ENCODE measurements at regions of chr4 and their contacts with region 1.

Region 1: DNA sequence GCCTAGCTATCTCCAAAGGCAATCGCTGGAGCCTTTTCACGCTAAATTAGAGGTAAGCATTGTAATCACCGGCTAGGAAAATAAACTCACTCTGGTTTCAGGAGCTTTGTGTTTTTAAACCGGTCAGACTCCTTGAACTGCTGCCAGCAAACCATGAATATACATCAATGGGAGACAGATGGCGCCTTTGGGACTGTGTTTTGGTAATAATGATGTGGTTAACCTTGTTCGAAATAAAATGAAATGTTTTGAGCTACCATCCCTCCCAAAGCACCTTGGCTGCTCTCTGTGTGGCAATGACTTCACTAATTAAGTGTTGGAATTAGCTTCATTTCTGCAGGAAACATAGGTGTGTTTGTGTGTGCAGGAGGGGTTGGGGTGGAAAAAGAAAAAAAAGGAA is 65.3 kb downstream of the CLNK start:
- DNase-seq: no peak

Region 2: GRCh38 chr4:12265554-12265953 is 1646.3 kb after region 1 on chr4:
- intact Hi-C with region 1: loop called in 1 of 2 experiments (anchors 5 kb)
- DNase-seq: no peak